Sciatic nerve (tissue), 2 donors: ENCODE measurements at regions of chr3 and their contacts with region 1.

Region 1: GRCh38 chr3:86037916-86038315 is 953.0 kb downstream of the VGLL3 start:
- DNase-seq: no peak
- ATAC-seq: no peak

Region 2: DNA sequence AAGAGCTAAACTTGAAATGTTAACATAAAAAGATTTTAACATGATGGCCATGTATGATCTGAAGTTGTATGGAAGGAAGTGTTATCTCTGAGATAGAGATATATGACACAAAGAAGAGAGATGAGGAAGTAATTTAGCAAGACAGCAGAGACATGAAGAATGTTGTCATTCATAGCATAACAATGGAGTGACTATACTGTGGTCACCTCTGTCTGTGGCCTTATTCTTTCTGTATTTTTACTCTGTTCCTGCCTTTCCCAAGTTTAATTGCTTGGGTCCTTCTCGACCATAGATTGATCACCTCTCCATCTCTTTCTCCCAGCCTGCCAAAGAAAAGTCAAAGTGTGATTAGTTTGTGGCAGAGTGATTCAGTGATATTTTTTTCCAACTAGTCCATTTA is 367.3 kb before region 1 on chr3:
- intact Hi-C with region 1: no loop called
- DNase-seq: no peak
- ATAC-seq: no peak

Region 3: GRCh38 chr3:86887876-86888275 is 850.0 kb after region 1 on chr3:
- intact Hi-C with region 1: loop called (anchors 10 kb)
- DNase-seq: no peak
- ATAC-seq: no peak